ENCODE measurements at regions of chr5 and their contacts with region 1.

Region 1: DNA sequence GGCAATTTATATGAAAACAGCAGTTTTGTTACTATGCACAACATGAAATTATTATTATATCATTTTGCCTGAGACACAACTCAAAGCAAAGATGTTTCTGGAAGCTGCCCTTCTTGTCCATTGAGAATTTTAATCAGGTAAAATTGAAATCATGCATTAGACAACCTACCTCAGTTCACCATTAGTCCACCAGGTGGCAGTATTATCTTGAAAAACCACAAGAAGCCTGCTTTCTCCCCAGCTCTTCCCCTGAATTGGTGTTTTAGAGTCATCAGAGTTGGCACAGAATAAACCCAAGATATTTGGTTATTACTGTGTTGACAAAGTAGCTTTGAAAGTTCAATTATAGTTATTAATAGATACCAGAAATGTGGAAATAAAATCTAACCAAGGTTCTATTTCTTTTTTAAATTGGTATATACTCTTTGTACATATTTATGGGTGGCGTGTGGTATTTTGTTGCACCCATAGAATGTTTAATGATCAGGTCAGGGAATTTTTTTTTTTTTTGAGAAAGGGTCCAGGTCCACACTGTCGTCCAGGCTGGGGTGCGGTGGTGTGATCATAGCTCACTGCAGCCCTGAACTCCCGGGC is 25.7 kb downstream of the UTP15 start:
- DNase-seq: peak; percentile 82
- H3K4me3 ChIP-seq: no peak overlapping the region
- H3K27ac ChIP-seq: no peak overlapping the region
- H3K4me1 ChIP-seq: peaks cover 18% of the 10 kb centered on the region
- H3K27me3 ChIP-seq: no peaks in the 10 kb centered on the region
- CTCF ChIP-seq: peak; percentile 49 to 56
- POLR2A ChIP-seq: no peak

Region 2: GRCh38 chr5:73513960-73514359 is 77.2 kb before region 1 on chr5:
- CTCF ChIA-PET with region 1: no interaction called
- POLR2A ChIA-PET with region 1: no interaction called
- dilution Hi-C with region 1: no loop called
- intact Hi-C with region 1: no loop called
- DNase-seq: no peak
- H3K4me3 ChIP-seq: no peak overlapping the region
- H3K27ac ChIP-seq: no peak overlapping the region
- H3K4me1 ChIP-seq: no peaks in the 10 kb centered on the region
- H3K27me3 ChIP-seq: no peaks in the 10 kb centered on the region
- CTCF ChIP-seq: no peak
- POLR2A ChIP-seq: no peak

Region 3: DNA sequence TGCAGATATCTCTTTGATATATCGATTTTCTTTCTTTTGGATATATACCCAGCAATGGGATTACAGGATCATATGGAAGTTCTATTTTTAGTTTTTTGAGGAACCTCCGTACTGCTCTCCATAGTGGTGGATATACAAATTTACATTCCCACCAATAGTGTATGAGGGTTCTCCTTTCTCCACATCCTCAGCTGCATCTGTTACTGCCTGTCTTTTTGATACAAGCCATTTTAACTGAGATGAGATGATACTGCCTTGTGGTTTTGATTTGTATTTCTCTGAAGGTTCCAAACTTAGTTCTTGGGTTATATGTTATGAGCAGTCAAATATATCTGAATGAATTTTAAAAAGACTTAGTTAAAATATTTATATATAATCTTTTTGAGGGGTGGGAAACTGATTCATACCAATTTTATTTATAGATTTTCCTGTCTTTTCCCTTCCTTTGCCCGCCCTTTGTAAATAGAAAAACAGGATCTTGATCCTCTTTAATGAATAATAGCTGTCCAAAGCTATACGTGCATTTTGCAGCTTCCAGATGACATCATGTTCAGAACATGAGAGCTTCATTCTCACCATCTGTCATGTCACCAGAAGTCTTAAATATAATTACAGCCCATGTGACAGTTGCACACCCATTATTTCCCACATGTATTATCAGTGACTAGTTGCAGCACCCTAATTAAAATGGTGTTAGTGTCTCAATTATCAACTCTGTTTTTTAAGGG is 28.6 kb after region 1 on chr5:
- CTCF ChIA-PET with region 1: interaction called, 17 read pairs
- POLR2A ChIA-PET with region 1: no interaction called
- dilution Hi-C with region 1: no loop called
- intact Hi-C with region 1: no loop called
- DNase-seq: no peak
- H3K4me3 ChIP-seq: no peak overlapping the region
- H3K27ac ChIP-seq: no peak overlapping the region
- H3K4me1 ChIP-seq: peaks cover 14% of the 10 kb centered on the region
- H3K27me3 ChIP-seq: no peaks in the 10 kb centered on the region
- CTCF ChIP-seq: no peak
- POLR2A ChIP-seq: no peak

Region 4: DNA sequence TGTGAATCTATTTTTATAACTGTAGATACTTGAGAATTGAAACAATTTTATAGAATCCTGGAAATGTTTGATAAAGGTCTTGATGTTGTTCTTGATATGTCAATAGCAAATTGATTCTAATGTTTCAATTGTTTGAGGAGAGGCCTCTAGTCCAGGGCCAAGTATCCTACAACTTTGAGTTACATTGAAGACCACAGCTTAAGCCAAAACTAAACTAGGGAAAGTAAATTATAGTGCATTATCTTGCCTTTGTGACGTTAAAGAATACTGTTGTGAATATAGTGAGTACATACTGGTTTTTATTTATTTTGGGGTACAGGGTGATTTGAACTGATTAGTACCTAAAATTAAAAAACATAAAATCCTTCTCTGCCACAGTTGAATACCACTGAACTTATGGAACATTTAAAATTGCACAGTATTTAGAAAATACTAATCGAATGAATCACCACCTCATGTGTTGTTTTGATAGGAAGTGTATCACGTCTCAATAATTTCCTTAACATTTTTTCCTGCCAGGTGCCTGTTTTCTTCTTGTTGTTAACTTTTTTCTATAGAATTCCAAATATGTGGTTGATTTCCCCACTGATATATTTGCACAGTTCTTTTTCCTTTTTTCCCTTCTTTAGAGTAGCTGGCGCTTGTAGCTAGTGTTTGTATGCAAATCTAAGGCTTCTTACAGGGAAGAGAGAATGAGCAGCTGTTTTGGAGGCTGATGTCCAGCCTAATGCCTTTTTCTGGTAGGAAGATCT is 47.3 kb after region 1 on chr5:
- CTCF ChIA-PET with region 1: interaction called, 14 read pairs
- POLR2A ChIA-PET with region 1: no interaction called
- dilution Hi-C with region 1: no loop called
- intact Hi-C with region 1: loop called (anchors 1 kb)
- DNase-seq: peak; percentile 95
- H3K4me3 ChIP-seq: peak overlapping the region in 1 of 3 experiments; percentile 27
- H3K27ac ChIP-seq: peak overlapping the region; percentile 97
- H3K4me1 ChIP-seq: peaks cover 77% of the 10 kb centered on the region
- H3K27me3 ChIP-seq: no peaks in the 10 kb centered on the region
- CTCF ChIP-seq: no peak
- POLR2A ChIP-seq: peak; percentile 75

Region 5: DNA sequence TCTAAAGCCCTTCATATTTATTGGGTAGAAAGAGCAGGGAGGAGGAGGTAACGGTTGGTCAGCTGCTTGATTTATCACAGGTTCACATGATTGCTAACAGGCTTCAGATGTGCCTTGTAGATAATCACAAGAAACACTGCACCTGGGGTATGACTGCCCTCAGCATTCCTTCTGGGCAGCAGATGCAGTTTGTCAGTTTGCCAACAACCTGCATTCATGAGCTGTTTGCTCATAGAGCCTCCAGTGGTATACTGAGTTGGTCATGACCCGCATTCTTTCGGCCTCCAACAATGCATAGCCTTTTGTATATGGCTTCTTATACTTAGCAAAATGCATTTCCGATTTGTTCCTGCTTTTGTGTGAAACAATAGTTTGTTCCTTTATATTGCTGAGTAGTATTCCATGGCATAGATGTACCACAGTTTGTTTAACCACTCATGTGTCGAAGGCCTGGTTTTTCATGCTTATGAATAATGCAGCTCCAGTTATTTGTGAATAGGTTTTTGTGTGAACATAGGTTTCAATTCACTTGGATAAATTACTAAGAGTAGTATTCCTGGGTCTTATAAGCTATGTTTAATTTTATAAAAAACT is 118.4 kb after region 1 on chr5:
- CTCF ChIA-PET with region 1: interaction called, 12 read pairs
- POLR2A ChIA-PET with region 1: no interaction called
- dilution Hi-C with region 1: no loop called
- intact Hi-C with region 1: no loop called
- DNase-seq: peak; percentile 46
- H3K4me3 ChIP-seq: no peak overlapping the region
- H3K27ac ChIP-seq: no peak overlapping the region
- H3K4me1 ChIP-seq: peaks cover 10% of the 10 kb centered on the region
- H3K27me3 ChIP-seq: no peaks in the 10 kb centered on the region
- CTCF ChIP-seq: no peak
- POLR2A ChIP-seq: no peak

Region 6: DNA sequence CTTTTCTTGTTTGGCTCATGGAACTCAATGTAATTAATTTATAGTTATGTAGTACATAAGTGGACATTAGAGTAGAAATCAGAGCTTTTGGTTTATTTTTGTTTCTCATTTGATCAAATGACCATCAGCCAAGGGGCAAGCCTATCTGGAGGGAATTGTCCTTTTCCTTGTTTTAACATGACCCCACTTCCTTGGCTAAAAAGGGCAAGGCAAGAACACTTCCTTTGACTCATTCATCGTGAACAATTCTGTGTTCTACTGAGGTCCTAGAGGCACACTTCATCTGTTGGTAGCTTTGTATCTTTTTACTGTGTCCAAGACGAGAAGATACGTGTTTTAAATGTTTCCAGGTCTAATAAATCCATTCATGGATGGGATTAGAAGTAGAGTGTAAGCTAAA is 183.7 kb after region 1 on chr5:
- CTCF ChIA-PET with region 1: interaction called, 13 read pairs
- POLR2A ChIA-PET with region 1: interaction called, 3 read pairs
- dilution Hi-C with region 1: no loop called
- intact Hi-C with region 1: no loop called
- DNase-seq: peak; percentile 87
- H3K4me3 ChIP-seq: no peak overlapping the region
- H3K27ac ChIP-seq: no peak overlapping the region
- H3K4me1 ChIP-seq: peaks cover 19% of the 10 kb centered on the region
- H3K27me3 ChIP-seq: no peaks in the 10 kb centered on the region
- CTCF ChIP-seq: no peak
- POLR2A ChIP-seq: peak; percentile 76

Region 7: DNA sequence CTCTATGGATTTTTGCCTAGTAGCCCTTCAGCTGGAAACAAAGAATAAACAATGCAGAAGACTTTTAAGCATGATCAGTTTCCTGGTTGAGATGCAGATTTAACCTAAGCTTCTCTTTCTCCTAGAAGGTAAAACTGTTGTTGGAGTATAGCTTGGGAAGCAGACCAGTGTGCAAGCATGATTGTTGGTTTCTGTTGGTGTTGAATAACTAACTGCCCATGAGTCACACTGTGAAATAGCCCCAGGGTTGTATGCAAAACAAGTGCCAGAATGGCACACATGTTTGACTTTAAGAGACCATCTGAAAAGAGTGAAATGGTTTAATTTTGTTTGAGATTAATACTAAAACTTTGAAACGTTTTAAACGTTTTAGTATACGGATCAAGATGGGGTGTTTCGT is 261.9 kb after region 1 on chr5:
- CTCF ChIA-PET with region 1: interaction called, 4 read pairs
- POLR2A ChIA-PET with region 1: no interaction called
- dilution Hi-C with region 1: no loop called
- intact Hi-C with region 1: loop called (anchors 10 kb)
- DNase-seq: no peak
- H3K4me3 ChIP-seq: no peak overlapping the region
- H3K27ac ChIP-seq: no peak overlapping the region
- H3K4me1 ChIP-seq: peaks cover 16% of the 10 kb centered on the region
- H3K27me3 ChIP-seq: no peaks in the 10 kb centered on the region
- CTCF ChIP-seq: no peak
- POLR2A ChIP-seq: no peak

Region 8: DNA sequence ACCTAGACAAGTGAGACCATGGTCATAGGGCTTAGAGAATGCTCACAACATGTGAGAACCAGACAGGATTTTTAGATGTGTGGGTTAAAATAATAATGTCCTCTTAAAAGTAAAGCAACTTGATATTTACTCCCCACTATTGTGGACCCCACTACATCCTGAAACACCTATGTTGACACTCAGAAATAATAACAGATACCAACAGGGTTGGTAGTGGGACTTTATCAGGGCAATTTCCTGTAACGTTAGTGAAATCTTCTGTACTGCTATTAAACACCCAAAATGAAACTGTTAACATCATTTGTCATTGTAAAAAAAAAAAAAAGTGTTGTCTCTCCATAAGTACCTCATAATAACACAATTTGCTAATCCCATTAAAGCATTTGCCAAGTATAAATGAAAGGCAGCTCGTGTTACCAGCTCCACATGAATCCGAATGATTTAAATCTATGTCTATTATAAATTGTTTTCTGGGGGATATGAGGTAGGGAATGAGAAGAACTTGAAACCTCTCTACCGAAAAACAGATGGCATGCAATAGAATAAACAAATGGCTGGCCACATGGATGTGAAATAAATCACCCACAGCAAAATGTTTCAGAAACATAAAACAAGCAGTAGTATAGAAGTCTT is 320.7 kb after region 1 on chr5:
- CTCF ChIA-PET with region 1: no interaction called
- POLR2A ChIA-PET with region 1: no interaction called
- dilution Hi-C with region 1: no loop called
- intact Hi-C with region 1: no loop called
- DNase-seq: no peak
- H3K4me3 ChIP-seq: no peak overlapping the region
- H3K27ac ChIP-seq: no peak overlapping the region
- H3K4me1 ChIP-seq: no peaks in the 10 kb centered on the region
- H3K27me3 ChIP-seq: no peaks in the 10 kb centered on the region
- CTCF ChIP-seq: no peak
- POLR2A ChIP-seq: no peak